ENCODE measurements at regions of chrX and their contacts with region 1.

Region 1: GRCh38 chrX:136780763-136781162 is at the start of gene ARHGEF6:
- H3K4me3 Mint-ChIP-seq: peak within 1 kb of the TSS; percentile 71
- H3K27ac Mint-ChIP-seq: peak within 1 kb of the TSS; percentile 92
- H3K4me1 Mint-ChIP-seq: peaks cover 51% of the 10 kb centered on the region
- H3K27me3 Mint-ChIP-seq: no peaks in the 10 kb centered on the region

Region 2: DNA sequence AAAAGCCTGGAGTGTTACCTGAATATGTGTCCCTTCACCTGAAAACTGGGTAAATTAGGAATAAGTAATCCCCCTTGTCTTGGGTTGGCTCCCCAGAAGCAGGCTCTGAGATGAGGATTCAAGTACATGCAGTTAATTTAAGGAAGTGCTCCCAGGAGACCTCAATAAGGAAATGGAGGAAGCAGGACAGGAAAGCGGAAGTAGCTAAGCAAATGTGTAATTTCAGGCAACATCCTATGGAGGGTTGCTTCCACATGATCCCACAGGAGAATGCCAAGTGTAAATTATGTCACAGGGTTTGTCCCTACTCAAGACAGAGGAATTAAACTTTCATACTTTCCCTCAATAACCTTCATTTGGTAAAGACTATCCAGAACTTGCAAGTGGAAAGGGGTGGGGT is 48.1 kb after region 1 on chrX:
- intact Hi-C with region 1: loop called (anchors 2 kb)
- H3K4me3 Mint-ChIP-seq: no peak overlapping the region
- H3K27ac Mint-ChIP-seq: peak overlapping the region; percentile 65
- H3K4me1 Mint-ChIP-seq: peaks cover 21% of the 10 kb centered on the region
- H3K27me3 Mint-ChIP-seq: no peaks in the 10 kb centered on the region

Region 3: DNA sequence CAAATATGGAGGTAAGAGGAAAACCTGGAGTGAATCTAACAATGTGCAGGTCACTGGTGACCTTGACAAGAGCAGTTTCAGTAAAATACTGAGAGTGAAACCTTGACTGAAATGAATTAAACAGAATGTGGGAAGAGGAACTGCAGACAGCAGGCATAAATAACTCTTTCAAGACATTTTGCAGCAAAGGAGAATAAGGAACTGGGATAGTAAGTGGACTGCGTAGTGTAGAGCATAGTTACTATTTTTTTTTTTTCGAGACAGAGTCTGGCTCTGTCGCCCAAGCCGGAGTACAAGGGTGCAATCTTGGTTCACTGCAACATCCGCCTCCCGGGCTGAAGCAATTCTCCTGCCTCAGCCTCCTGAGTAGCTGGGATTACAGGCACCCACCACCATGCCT is 75.8 kb after region 1 on chrX:
- intact Hi-C with region 1: loop called (anchors 10 kb)
- H3K4me3 Mint-ChIP-seq: peak overlapping the region; percentile 51
- H3K27ac Mint-ChIP-seq: peak overlapping the region; percentile 85
- H3K4me1 Mint-ChIP-seq: peaks cover 46% of the 10 kb centered on the region
- H3K27me3 Mint-ChIP-seq: no peaks in the 10 kb centered on the region